BJ (cell line): ENCODE measurements at regions of chr6 and their contacts with region 1.

Region 1: GRCh38 chr6:122381497-122382265 is 17.8 kb upstream of the HSF2 start:
- DNase-seq: peak; percentile 20
- H3K4me3 ChIP-seq: no peak overlapping the region
- H3K27me3 ChIP-seq: peaks cover 3% of the 10 kb centered on the region; the same call in 1 of the 2 replicates
- CTCF ChIP-seq: peak; percentile 88

Region 2: GRCh38 chr6:122098201-122098678 is 283.4 kb before region 1 on chr6:
- CTCF ChIA-PET with region 1: no interaction called
- POLR2A ChIA-PET with region 1: no interaction called
- DNase-seq: no peak
- H3K4me3 ChIP-seq: no peak overlapping the region
- H3K27me3 ChIP-seq: no peaks in the 10 kb centered on the region
- CTCF ChIP-seq: no peak

Region 3: GRCh38 chr6:122352981-122353664 is 28.6 kb before region 1 on chr6:
- CTCF ChIA-PET with region 1: no interaction called
- POLR2A ChIA-PET with region 1: no interaction called
- DNase-seq: no peak
- H3K4me3 ChIP-seq: no peak overlapping the region
- H3K27me3 ChIP-seq: no peaks in the 10 kb centered on the region
- CTCF ChIP-seq: no peak

Region 4: DNA sequence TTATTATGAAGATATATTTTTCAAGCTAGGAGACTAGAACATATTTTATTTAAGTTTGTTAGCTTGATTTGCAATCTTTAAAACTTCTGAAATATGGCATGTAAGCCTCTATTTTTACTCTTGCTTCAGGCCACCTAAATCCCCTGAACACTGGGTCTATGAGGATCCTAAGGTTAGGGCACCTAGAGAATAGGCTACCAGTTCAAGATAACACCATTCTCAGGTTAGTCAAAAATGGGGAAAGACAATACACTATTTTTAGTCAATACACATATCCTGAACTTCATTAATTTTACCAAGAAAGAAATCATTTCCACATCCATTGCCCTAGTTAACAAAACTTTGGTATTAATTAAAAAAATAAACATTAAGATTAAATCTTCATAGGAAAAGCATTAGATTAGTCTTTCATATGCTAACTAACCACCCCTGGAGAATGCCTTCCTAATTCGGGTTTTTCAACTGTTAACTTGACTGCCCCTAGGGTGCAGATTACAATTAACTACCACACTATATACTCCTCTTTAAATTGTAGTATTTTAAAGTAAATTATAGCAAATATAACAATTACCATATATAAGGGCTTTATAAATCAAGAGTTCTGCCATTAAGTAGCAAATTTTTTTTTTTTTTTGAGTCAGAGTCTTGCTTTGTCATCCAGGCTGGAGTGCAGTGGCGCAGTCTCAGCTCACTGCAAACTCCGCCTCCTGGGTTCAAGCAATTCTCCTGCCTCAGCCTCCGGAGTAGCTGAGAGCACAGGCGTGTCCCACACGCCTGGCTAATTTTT is 11.1 kb after region 1 on chr6:
- CTCF ChIA-PET with region 1: interaction called, 11 read pairs
- POLR2A ChIA-PET with region 1: no interaction called
- DNase-seq: no peak
- H3K4me3 ChIP-seq: no peak overlapping the region
- H3K27me3 ChIP-seq: no peaks in the 10 kb centered on the region
- CTCF ChIP-seq: no peak

Region 5: GRCh38 chr6:122399384-122400158 is 17.9 kb after region 1 on chr6 and contains the start of gene HSF2:
- CTCF ChIA-PET with region 1: interaction called, 11 read pairs
- POLR2A ChIA-PET with region 1: no interaction called
- DNase-seq: no peak
- H3K4me3 ChIP-seq: peak within 1 kb of the TSS; percentile 98
- H3K27me3 ChIP-seq: no peaks in the 10 kb centered on the region
- CTCF ChIP-seq: peak; percentile 43
- polyA plus RNA-seq, gene HSF2: 15.3 and 25.2 TPM in 2 replicates

Region 6: GRCh38 chr6:122449069-122449468 is 67.4 kb after region 1 on chr6:
- CTCF ChIA-PET with region 1: no interaction called
- POLR2A ChIA-PET with region 1: no interaction called
- DNase-seq: no peak
- H3K4me3 ChIP-seq: no peak overlapping the region
- H3K27me3 ChIP-seq: no peaks in the 10 kb centered on the region
- CTCF ChIP-seq: no peak

Region 7: DNA sequence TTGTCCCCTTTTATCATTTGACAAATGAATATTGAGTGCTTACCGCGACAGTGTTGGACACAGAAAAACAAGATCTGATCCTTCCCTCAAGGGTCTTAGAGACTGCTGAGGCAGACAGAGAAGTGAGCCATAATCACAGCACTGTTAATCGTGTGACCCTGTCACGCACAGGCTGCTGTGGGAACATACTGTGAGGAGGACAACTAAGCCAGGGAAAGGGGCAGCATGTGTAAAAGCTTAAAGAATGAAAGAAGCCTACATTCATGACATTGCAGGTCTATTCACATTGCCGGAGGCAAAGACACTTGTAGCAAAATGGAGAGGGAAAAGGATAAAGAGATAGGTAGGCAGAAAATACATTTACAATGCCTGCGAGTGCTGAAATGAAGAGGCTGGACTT is 1222.4 kb after region 1 on chr6:
- CTCF ChIA-PET with region 1: no interaction called
- POLR2A ChIA-PET with region 1: no interaction called
- DNase-seq: no peak
- H3K4me3 ChIP-seq: no peak overlapping the region
- H3K27me3 ChIP-seq: no peaks in the 10 kb centered on the region
- CTCF ChIP-seq: no peak